ENCODE measurements at regions of chr3 and their contacts with region 1.

Region 1: GRCh38 chr3:12405432-12406272 is 78.6 kb upstream of the TSEN2 start:
- DNase-seq: peak; percentile 99
- ATAC-seq: peak; percentile 98
- H3K4me3 ChIP-seq: peak overlapping the region in 2 of 3 experiments; percentile 7 to 32; a peak in 2 of 6 replicates
- H3K27ac ChIP-seq: peak overlapping the region; percentile 91
- H3K4me1 ChIP-seq: peaks cover 72% of the 10 kb centered on the region
- H3K27me3 ChIP-seq: no peaks in the 10 kb centered on the region
- CTCF ChIP-seq: no peak
- EP300 ChIP-seq: peak; percentile 82 to 93; a peak in 3 of 4 replicates
- POLR2A ChIP-seq: peak; percentile 81 to 83
- RAD21 ChIP-seq: peak; percentile 41

Region 2: GRCh38 chr3:11757441-11757875 is 648.2 kb before region 1 on chr3:
- CTCF ChIA-PET with region 1: no interaction called
- POLR2A ChIA-PET with region 1: no interaction called
- in situ Hi-C with region 1: no loop called
- intact Hi-C with region 1: no loop called
- DNase-seq: no peak
- ATAC-seq: no peak; the same call in 1 of the 3 replicates
- H3K4me3 ChIP-seq: no peak overlapping the region
- H3K27ac ChIP-seq: no peak overlapping the region
- H3K4me1 ChIP-seq: no peaks in the 10 kb centered on the region
- H3K27me3 ChIP-seq: peaks cover 0 to 17% of the 10 kb centered on the region in 2 experiments; a peak in 3 of 5 replicates
- CTCF ChIP-seq: no peak
- EP300 ChIP-seq: no peak
- POLR2A ChIP-seq: no peak
- RAD21 ChIP-seq: no peak

Region 3: GRCh38 chr3:12287727-12288191 is 117.9 kb before region 1 on chr3:
- CTCF ChIA-PET with region 1: no interaction called
- POLR2A ChIA-PET with region 1: interaction called, 7 read pairs
- in situ Hi-C with region 1: no loop called
- intact Hi-C with region 1: loop called (anchors 5 kb)
- DNase-seq: no peak
- ATAC-seq: peak; percentile 85
- H3K4me3 ChIP-seq: peak overlapping the region; percentile 69 to 97 (median 90)
- H3K27ac ChIP-seq: peak overlapping the region; percentile 80
- H3K4me1 ChIP-seq: peaks cover 29% of the 10 kb centered on the region
- H3K27me3 ChIP-seq: no peaks in the 10 kb centered on the region; a peak in 1 of 5 replicates
- CTCF ChIP-seq: no peak; the same call in 1 of the 2 replicates
- EP300 ChIP-seq: no peak
- POLR2A ChIP-seq: peak in 1 of 2 experiments; percentile 30; a peak in 2 of 4 replicates
- RAD21 ChIP-seq: no peak

Region 4: DNA sequence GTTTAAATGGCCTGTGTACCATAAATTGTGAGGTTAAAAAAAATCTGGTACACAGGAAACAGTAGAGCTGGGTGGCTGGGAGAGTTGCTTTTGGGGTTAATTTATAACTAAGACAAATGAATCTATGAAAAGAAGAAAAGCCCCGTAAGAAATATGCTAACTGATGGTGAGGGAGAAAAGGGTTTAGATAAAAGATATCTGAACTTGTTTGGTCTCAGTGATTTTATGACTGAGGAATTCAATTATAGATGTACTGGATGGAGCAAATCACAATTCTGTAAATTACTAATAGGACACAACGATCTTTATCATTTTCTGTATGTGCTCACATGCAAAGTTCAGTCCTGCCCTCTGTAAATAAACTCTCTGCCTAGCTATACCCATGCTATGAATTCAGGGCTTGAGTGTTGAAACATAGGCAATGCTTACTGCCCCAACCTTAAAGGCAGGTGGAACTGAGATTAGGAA is 88.8 kb before region 1 on chr3:
- CTCF ChIA-PET with region 1: no interaction called
- POLR2A ChIA-PET with region 1: interaction called, 4 read pairs
- in situ Hi-C with region 1: no loop called
- intact Hi-C with region 1: loop called (anchors 5 kb)
- DNase-seq: peak; percentile 73
- ATAC-seq: peak; percentile 99
- H3K4me3 ChIP-seq: peak overlapping the region; percentile 17 to 44 (median 43); a peak in 3 of 6 replicates
- H3K27ac ChIP-seq: peak overlapping the region; percentile 55
- H3K4me1 ChIP-seq: peaks cover 34% of the 10 kb centered on the region
- H3K27me3 ChIP-seq: no peaks in the 10 kb centered on the region
- CTCF ChIP-seq: no peak
- EP300 ChIP-seq: no peak
- POLR2A ChIP-seq: no peak
- RAD21 ChIP-seq: no peak

Region 5: DNA sequence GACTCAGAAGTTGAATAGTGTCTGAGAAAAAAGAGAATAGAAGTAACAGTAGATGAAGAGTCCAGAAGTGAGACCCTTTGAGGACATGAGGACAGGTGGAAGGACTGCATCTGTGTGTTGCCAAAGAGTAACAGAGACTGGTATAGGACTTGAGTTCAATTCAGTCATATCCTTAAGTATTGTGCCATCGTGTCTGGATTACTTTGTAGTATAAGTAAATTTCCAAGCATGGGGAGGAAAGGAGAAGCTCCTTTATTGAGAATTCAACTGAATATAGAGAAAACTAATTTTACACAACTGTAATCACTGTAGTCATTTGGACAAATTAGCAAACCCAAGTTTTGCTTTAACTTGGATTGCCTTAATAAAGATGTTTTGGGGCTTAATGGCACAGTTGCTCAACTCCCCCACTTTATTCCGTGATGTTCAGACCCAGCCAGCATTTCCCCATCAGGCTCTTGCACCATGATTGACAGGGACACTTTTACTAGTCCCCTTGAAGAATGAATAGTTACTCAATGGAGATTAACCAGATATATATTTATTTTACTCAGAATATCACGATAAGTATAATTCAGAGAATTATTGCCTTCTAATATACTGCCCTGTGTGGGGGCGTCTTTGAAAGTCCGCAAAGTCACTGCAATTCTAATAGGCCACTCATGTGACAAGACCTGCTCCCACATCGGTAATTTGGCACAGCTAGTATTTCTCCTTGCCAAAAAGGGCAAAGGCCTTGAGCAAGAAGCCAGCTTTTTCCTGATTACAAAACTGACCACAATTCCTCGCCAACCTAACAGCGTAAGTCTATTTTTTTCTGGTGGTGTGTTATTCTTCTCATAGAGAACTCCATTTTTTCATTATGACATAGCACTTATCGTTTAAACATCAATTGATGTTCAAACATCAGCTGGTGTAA is 55.5 kb before region 1 on chr3:
- CTCF ChIA-PET with region 1: no interaction called
- POLR2A ChIA-PET with region 1: no interaction called
- in situ Hi-C with region 1: no loop called
- intact Hi-C with region 1: no loop called
- DNase-seq: no peak
- ATAC-seq: no peak
- H3K4me3 ChIP-seq: no peak overlapping the region
- H3K27ac ChIP-seq: no peak overlapping the region
- H3K4me1 ChIP-seq: no peaks in the 10 kb centered on the region
- H3K27me3 ChIP-seq: no peaks in the 10 kb centered on the region
- CTCF ChIP-seq: no peak
- EP300 ChIP-seq: no peak
- POLR2A ChIP-seq: no peak
- RAD21 ChIP-seq: no peak

Region 6: DNA sequence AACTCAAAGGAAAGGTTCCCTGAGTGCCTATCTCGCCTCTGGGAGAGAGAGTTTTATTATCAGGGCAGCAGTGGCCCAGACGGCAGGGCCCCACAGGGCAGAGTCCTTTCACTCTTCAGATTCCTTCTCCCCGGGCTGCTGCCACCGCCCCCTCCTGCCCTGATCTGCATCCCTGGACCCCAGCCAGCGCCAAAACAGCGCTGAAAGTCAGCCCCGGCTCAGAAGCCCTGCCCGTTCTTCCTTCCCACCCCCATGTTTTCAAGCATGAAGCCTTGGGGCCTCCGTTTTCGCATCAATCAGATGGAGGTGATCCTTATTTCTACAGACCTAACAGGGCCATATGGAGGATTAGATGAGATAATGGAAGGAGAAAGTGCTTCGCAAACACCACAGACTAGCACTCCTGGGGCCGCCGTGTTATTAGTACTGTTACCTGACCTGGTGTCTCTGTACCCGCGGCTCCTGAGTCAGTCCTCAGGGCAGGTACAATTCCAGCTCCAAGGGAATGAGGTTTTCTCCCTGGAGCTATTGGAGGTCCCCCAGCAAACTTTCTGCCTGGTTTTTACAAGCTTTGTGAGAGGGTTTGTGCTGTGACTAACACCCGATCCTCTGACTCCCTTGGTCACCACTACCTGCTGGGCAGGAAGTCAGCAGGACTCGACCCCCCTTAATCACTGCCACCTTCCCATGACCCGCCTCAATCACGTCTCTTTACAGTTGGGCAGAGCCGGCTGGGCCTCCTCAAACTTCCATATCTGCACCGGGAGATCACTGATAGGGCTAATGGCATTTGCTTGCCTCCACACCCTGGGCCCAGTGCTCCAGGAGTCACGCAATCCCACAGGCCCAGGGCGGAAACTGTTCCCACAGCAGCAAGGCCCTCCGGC is 39.2 kb after region 1 on chr3:
- CTCF ChIA-PET with region 1: no interaction called
- POLR2A ChIA-PET with region 1: interaction called, 7 read pairs
- in situ Hi-C with region 1: no loop called
- intact Hi-C with region 1: loop called (anchors 2 kb)
- DNase-seq: peak; percentile 78
- ATAC-seq: peak; percentile 94
- H3K4me3 ChIP-seq: peak overlapping the region; percentile 39 to 53 (median 42)
- H3K27ac ChIP-seq: peak overlapping the region; percentile 93
- H3K4me1 ChIP-seq: peaks cover 47% of the 10 kb centered on the region
- H3K27me3 ChIP-seq: no peaks in the 10 kb centered on the region
- CTCF ChIP-seq: peak; percentile 40
- EP300 ChIP-seq: peak; percentile 19 to 64; a peak in 3 of 4 replicates
- POLR2A ChIP-seq: peak in 1 of 2 experiments; percentile 51; a peak in 3 of 4 replicates
- RAD21 ChIP-seq: peak; percentile 34

Region 7: GRCh38 chr3:12452361-12453330 is 47.0 kb after region 1 on chr3:
- CTCF ChIA-PET with region 1: no interaction called
- POLR2A ChIA-PET with region 1: interaction called, 16 read pairs
- in situ Hi-C with region 1: no loop called
- intact Hi-C with region 1: no loop called
- DNase-seq: peak; percentile 94
- ATAC-seq: peak; percentile 94
- H3K4me3 ChIP-seq: no peak overlapping the region
- H3K27ac ChIP-seq: peak overlapping the region; percentile 83
- H3K4me1 ChIP-seq: peaks cover 86% of the 10 kb centered on the region
- H3K27me3 ChIP-seq: no peaks in the 10 kb centered on the region
- CTCF ChIP-seq: peak; percentile 54
- EP300 ChIP-seq: peak in 1 of 2 experiments; percentile 80; a peak in 2 of 4 replicates
- POLR2A ChIP-seq: no peak; a peak in 1 of 4 replicates
- RAD21 ChIP-seq: peak; percentile 34

Measured in HepG2 (cell line).